ENCODE measurements at regions of chr15 and their contacts with region 1.

Region 1: DNA sequence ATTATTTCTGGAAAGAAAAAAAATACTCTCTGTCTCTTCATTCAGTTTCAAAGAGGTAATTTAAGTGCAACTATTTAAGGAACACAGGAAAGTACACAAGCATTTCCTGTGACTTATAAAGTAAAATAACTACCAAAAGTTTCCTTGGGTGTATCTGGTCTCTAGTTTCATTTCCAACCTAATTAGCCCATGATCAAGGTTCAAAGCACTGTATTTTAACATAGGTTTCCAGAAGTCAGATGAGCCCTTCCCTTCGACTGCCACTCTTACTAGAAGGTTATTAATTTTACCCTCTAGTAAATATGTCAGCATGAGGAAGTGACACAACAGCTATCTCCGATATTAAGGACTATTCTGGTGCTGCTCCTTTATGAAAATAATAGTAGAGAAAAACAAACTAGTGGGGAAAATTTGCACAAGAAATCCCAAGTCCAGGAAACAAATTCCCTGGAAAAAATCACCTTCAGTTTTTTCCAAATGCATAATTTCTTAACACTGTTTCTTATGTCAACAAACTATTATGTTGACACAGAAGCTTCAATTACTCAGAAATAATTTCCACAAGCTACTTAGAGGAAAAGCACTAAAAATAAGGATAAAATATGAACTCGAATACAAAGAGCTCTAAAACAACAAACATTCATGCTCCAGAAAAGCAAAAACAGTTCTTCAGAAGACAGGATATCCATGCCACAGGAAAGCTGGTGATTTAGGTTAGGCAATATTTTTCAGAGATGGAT is 35.3 kb downstream of the CCPG1 start:
- DNase-seq: peak; percentile 18
- CTCF ChIP-seq: no peak

Region 2: GRCh38 chr15:54304321-54304720 is 1068.5 kb before region 1 on chr15:
- CTCF ChIA-PET with region 1: no interaction called
- POLR2A ChIA-PET with region 1: no interaction called
- DNase-seq: no peak
- CTCF ChIP-seq: no peak

Region 3: GRCh38 chr15:55124616-55125015 is 248.3 kb before region 1 on chr15:
- CTCF ChIA-PET with region 1: no interaction called
- POLR2A ChIA-PET with region 1: no interaction called
- DNase-seq: no peak
- CTCF ChIP-seq: no peak

Region 4: DNA sequence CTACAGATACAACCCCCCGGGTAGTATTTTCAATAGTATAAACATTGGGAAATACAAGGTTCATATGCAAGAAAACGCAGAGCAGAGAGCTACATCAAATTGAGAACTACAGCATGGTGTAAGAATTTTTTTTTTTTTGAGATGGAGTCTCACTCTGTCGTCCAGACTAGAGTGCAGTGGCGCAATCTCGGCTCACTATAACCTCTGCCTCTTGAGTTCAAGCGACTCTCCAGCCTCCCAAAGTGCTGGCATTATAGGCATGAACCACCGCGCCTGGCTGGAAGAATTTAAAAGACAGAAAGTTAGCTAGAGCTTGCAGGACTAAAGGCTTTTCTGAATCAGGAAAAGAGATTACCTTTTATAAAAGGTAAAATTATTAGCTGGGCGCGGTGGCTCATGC is 11.8 kb before region 1 on chr15:
- CTCF ChIA-PET with region 1: interaction called, 20 read pairs
- POLR2A ChIA-PET with region 1: no interaction called
- DNase-seq: no peak
- CTCF ChIP-seq: no peak

Region 5: GRCh38 chr15:55468321-55468720 is 95.5 kb after region 1 on chr15:
- CTCF ChIA-PET with region 1: no interaction called
- POLR2A ChIA-PET with region 1: no interaction called
- DNase-seq: no peak
- CTCF ChIP-seq: no peak

Region 6: DNA sequence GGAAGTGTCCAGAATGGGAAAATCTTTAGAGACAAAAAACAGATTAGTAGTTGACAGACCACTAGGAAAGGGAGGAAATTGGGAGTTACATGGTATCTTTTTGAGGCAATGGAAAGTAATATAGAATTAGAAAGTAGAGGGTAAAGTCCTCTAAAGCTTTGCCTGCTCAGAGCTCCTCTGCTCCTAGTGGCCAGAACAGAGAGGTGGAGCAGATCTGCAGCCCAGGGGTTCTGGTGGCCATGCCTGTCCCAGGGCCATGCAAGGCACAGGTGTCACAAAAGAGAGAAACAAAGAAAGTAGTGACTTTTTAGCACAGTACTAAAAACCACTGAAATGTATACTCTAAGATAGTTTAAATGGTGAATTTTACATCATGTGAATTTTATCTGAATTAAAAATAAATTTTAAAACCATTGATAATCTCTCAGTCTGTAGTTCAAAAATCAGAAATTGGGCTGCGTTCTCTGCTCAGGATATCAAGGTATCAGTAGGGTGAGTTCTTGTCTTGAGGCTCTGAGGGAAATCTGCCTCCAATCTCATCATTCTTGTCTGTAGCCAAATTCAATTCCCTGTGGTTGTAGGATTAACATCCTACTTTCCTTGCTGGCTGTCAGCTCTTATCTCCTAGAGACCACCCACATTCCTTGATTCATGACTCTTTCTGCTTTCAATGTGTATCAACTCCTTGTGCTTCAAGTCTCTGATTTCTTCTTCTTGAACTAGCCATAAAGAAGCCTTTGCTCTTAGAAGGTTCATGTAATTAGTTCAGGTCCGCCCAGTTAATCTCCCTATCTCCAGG is 191.7 kb after region 1 on chr15:
- CTCF ChIA-PET with region 1: no interaction called
- POLR2A ChIA-PET with region 1: no interaction called
- DNase-seq: no peak
- CTCF ChIP-seq: no peak

Measured in GM10248 (cell line).